Activated CD8-positive, alpha-beta memory T cell treated with anti-CD3 and anti-CD28 coated beads, Interleukin-2, amount 10 ng/mL, durations not matched to agents 7 days and 5 days (primary cell): ENCODE measurements at regions of chr16 and their contacts with region 1.

Region 1: DNA sequence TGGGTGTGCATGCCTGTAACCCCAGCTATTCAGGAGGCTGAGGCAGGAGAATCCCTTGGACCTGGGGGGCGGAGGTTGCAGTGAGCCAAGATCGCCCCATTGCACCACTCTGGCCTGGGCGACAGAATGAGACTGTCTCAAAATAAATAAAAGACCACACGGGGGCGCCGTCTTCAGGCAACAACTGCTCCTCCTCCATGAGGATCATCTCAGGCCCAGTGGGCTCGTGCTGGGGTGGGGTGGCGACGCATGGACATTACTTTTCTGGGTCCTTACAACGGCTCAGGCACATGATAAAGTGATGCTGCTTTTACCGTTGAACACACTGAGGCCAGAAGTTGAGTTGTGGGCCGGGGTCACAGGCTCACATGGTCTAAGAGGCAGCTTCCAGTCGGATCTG is 56.2 kb downstream of the PRMT7 start:
- DNase-seq: peak; percentile 66
- ATAC-seq: peak; percentile 41
- H3K4me3 Mint-ChIP-seq: no peak overlapping the region
- H3K27ac Mint-ChIP-seq: no peak overlapping the region
- H3K4me1 Mint-ChIP-seq: peaks cover 42% of the 10 kb centered on the region
- H3K27me3 Mint-ChIP-seq: peaks cover 23% of the 10 kb centered on the region

Region 2: DNA sequence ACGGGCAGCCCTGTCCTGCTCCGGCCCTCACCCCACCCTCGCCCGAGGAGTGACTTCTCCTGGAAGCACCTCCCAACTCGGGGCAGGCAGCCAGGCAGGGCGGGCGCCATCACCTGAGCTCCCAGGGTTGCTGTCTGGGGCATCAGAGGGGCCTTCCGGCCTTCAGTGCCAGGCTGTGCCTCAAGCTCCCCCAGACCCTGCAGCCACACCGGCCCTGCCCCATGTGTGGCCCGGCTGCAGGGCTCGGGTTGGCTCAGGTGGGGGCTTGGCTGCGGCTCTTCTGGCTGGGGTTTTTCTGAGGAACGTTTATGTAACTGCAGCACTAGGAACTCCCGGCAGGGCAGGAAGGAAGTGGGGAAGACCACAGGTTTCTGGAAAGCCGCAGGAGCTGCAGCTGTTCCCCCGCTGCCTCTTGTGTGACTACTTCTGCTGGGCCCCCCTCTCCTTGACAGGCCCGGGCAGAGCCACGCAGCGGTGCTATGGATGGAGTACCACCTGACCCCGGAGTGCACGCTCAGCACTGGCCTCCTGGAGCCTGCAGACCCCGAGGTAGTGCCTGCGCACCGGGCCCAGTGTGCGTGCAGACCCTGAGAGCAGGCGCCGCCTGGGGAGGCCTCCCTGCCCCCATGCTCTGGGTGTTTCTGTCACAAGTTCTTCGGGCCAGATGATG is 10.6 kb before region 1 on chr16:
- CTCF ChIA-PET with region 1: interaction called, 48 read pairs
- DNase-seq: peak; percentile 95
- ATAC-seq: peak; percentile 84
- H3K4me3 Mint-ChIP-seq: peak overlapping the region; percentile 32
- H3K27ac Mint-ChIP-seq: peak overlapping the region; percentile 69
- H3K4me1 Mint-ChIP-seq: peaks cover 37% of the 10 kb centered on the region
- H3K27me3 Mint-ChIP-seq: no peaks in the 10 kb centered on the region

Region 3: GRCh38 chr16:68377670-68378393 is 10.8 kb after region 1 on chr16:
- CTCF ChIA-PET with region 1: interaction called, 12 read pairs
- DNase-seq: no peak
- ATAC-seq: no peak
- H3K4me3 Mint-ChIP-seq: no peak overlapping the region
- H3K27ac Mint-ChIP-seq: no peak overlapping the region
- H3K4me1 Mint-ChIP-seq: peaks cover 14% of the 10 kb centered on the region
- H3K27me3 Mint-ChIP-seq: peaks cover 36% of the 10 kb centered on the region

Region 4: DNA sequence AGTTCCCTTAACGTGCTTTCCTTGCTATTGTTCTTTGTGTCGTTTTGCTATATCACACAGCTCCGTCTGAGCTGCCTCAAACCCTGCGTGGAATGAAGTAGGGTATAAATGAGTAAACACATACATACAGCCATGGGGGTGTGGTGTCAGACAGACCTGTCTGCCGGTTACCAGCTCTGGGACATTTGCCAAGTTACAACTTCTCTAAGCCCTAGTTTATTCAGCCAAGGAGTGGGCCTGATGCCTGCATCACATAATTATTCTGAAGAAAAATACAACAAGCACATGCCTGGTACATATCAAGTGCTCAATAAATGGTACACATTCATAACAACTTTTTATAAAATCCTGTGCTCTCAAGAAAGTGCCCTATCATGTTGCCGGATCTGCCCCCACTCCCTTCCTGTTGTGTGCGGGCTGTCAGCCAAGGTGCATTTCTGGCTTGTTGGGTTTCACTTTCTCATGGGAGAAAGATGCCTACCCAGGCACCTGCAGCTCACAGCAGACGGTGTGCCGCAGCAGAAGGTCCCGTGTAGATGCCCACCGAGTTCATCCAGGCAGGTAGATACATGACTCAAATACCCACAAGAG is 50.8 kb after region 1 on chr16:
- CTCF ChIA-PET with region 1: interaction called, 14 read pairs
- DNase-seq: peak; percentile 89
- ATAC-seq: peak; percentile 91
- H3K4me3 Mint-ChIP-seq: peak overlapping the region; percentile 62
- H3K27ac Mint-ChIP-seq: peak overlapping the region; percentile 88
- H3K4me1 Mint-ChIP-seq: peaks cover 24% of the 10 kb centered on the region
- H3K27me3 Mint-ChIP-seq: no peaks in the 10 kb centered on the region